Activated T-helper 1 cell treated with anti-CD3 and anti-CD28 coated beads, Interleukin-12 subunit alpha, Interleukin-12 subunit beta, Interleukin-2, Interleukin-4 antibody, amounts not matched to agents 30 ng/mL and 10 ng/mL and 1 ng/mL, durations not matched to agents 14 hours and 24 hours and 36 hours (primary cell): ENCODE measurements at regions of chr18 and their contacts with region 1.

Region 1: GRCh38 chr18:5600378-5601071 is 56.7 kb upstream of the EPB41L3 start:
- DNase-seq: no peak
- H3K4me3 Mint-ChIP-seq: no peak overlapping the region
- H3K27ac Mint-ChIP-seq: no peak overlapping the region
- H3K4me1 Mint-ChIP-seq: no peaks in the 10 kb centered on the region
- H3K27me3 Mint-ChIP-seq: no peaks in the 10 kb centered on the region

Region 2: GRCh38 chr18:3722320-3723000 is 1878.1 kb before region 1 on chr18:
- intact Hi-C with region 1: no loop called
- DNase-seq: no peak
- H3K4me3 Mint-ChIP-seq: no peak overlapping the region
- H3K27ac Mint-ChIP-seq: no peak overlapping the region
- H3K4me1 Mint-ChIP-seq: no peaks in the 10 kb centered on the region
- H3K27me3 Mint-ChIP-seq: peaks cover 17% of the 10 kb centered on the region

Region 3: GRCh38 chr18:5890331-5891183 is 290.0 kb after region 1 on chr18:
- intact Hi-C with region 1: loop called (anchors 10 kb)
- DNase-seq: no peak
- H3K4me3 Mint-ChIP-seq: no peak overlapping the region
- H3K27ac Mint-ChIP-seq: no peak overlapping the region
- H3K4me1 Mint-ChIP-seq: no peaks in the 10 kb centered on the region
- H3K27me3 Mint-ChIP-seq: peaks cover 66% of the 10 kb centered on the region